Esophagus muscularis mucosa (tissue), 4 donors: ENCODE measurements at regions of chr12 and their contacts with region 1.

Region 1: DNA sequence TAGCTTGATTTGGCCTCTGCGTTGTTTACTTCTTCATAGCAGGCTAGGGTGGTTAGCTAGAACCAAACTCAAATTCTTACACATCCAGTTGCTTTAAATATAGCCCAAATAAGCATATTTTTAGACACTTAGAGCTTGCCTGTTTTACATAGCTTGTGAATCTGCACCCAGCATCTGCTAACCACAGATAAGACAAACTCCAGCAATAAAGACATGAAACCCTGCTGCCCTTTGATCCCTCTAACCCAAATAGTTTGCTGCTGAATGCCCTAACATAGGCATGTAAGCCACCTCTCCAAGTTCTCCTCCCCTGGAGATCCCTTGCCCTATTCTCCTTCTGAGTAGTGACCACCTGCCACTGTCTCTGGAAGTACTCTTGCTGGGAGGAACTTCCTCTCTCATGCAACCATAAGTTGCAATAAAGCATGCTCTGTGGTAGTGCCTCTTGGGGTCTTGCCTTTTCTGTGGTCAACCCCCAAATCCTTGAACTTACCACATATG is 185.6 kb downstream of the TMEM117 start:
- DNase-seq: no peak
- H3K4me3 ChIP-seq: no peak overlapping the region
- H3K27ac ChIP-seq: no peak overlapping the region
- H3K4me1 ChIP-seq: no peaks in the 10 kb centered on the region
- H3K27me3 ChIP-seq: no peaks in the 10 kb centered on the region
- CTCF ChIP-seq: no peak
- EP300 ChIP-seq: no peak
- POLR2A ChIP-seq: no peak

Region 2: GRCh38 chr12:44929236-44929885 is 907.8 kb after region 1 on chr12:
- intact Hi-C with region 1: loop called (anchors 10 kb)
- DNase-seq: no peak
- H3K4me3 ChIP-seq: no peak overlapping the region
- H3K27ac ChIP-seq: no peak overlapping the region
- H3K4me1 ChIP-seq: no peaks in the 10 kb centered on the region
- H3K27me3 ChIP-seq: no peaks in the 10 kb centered on the region
- CTCF ChIP-seq: no peak
- EP300 ChIP-seq: no peak
- POLR2A ChIP-seq: no peak

Region 3: GRCh38 chr12:45273717-45274271 is 1252.3 kb after region 1 on chr12:
- intact Hi-C with region 1: no loop called
- DNase-seq: no peak
- H3K4me3 ChIP-seq: no peak overlapping the region
- H3K27ac ChIP-seq: peak overlapping the region; percentile 29 to 61 (median 40)
- H3K4me1 ChIP-seq: peaks cover 63 to 97% (median 90%) of the 10 kb centered on the region in 4 donors
- H3K27me3 ChIP-seq: no peaks in the 10 kb centered on the region
- CTCF ChIP-seq: no peak
- EP300 ChIP-seq: no peak
- POLR2A ChIP-seq: no peak